ENCODE measurements at regions of chr17 and their contacts with region 1.

Region 1: GRCh38 chr17:61412143-61412859 is 12.7 kb downstream of the TBX2 start:
- DNase-seq: peak; percentile 76
- H3K27ac ChIP-seq: peak overlapping the region; percentile 70
- CTCF ChIP-seq: peak; percentile 98

Region 2: DNA sequence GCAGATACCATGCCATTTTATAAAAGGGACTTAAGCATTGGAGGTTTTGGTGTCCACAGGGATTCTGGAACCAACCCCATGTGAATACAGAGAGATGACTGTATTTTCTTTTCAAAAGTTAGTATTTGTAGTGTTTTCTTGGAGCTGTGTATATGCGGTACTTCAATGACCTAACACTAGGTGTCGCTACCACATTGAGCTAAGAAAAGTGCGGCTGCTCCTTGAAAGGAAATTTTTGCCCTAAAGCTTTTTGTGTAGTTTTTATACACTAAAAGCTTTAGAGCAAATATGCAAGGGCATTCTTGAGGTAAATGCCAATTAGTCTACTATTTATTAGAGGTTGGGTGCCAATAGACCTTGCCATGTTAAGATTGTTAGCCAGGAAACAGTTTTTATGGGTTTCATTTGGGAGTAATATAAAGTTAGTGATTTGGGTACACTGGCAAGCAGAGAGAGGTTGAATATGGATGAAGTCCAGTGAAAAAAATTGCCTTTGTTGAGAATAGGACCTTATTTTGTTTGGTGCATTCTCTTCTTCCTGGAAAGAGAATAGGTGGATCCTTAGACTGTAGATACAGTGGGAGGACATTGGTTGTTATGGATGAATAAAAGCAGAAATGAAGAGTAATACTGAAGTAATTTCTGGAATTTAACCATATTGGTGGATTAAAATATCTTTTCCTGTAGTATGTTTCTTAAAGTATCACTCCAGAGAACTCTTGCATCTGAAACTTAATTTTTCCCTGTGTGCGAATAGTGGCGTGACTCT is 691.4 kb before region 1 on chr17:
- CTCF ChIA-PET with region 1: interaction called, 15 read pairs
- POLR2A ChIA-PET with region 1: no interaction called
- DNase-seq: peak; percentile 46
- H3K27ac ChIP-seq: no peak overlapping the region
- CTCF ChIP-seq: peak; percentile 92

Region 3: GRCh38 chr17:61574542-61575174 is 162.4 kb after region 1 on chr17:
- CTCF ChIA-PET with region 1: interaction called, 19 read pairs
- POLR2A ChIA-PET with region 1: no interaction called
- DNase-seq: peak; percentile 51
- H3K27ac ChIP-seq: no peak overlapping the region
- CTCF ChIP-seq: peak; percentile 34; the same call in 1 of the 2 replicates

Measured in RWPE1 (cell line).